Astrocyte of the cerebellum (primary cell): ENCODE measurements at regions of chr2 and their contacts with region 1.

Region 1: DNA sequence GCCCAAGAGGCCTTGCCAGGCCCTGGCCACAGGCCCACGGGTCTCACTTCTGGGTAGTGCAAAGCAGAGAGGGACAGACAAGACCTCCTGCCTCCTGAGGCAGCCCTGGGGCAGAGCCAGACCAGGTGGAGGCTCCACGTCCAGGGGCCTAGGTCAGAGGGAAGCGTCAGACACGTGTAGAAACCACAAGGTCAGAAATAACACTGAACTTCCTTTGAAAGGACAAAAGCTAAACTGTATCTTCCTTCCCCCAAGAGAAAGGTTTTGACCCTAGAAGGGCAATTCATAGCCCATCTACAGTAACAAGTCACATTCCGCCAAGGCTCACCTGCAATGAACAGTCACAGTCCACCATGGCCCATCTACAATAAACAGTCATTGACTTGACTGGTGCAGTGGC is 17.9 kb downstream of the SDC1 start:
- DNase-seq: no peak
- H3K4me3 ChIP-seq: no peak overlapping the region
- CTCF ChIP-seq: no peak

Region 2: DNA sequence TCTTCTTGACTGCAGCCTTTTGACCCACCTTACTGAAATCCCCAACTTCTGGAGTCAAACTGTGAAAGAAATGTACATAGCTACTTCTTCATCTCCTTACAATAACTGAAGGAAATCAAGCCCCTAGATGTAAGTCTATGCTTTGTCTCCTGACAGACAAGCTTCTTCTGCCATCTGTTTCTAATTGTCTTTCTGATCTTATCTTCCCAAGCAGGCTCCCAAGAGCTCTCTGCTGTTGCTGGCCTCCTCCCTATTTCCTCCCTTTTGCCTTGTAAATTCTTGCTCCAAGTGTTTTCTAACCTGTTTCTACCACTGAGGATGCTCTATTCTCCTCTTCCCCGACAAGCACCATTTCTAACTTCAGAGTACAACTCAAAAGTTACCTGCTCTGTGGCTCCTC is 771.2 kb before region 1 on chr2:
- in situ Hi-C with region 1: no loop called
- DNase-seq: no peak
- H3K4me3 ChIP-seq: no peak overlapping the region
- CTCF ChIP-seq: no peak

Region 3: GRCh38 chr2:19554520-19554919 is 652.5 kb before region 1 on chr2:
- in situ Hi-C with region 1: no loop called
- DNase-seq: no peak
- H3K4me3 ChIP-seq: no peak overlapping the region
- CTCF ChIP-seq: no peak

Region 4: DNA sequence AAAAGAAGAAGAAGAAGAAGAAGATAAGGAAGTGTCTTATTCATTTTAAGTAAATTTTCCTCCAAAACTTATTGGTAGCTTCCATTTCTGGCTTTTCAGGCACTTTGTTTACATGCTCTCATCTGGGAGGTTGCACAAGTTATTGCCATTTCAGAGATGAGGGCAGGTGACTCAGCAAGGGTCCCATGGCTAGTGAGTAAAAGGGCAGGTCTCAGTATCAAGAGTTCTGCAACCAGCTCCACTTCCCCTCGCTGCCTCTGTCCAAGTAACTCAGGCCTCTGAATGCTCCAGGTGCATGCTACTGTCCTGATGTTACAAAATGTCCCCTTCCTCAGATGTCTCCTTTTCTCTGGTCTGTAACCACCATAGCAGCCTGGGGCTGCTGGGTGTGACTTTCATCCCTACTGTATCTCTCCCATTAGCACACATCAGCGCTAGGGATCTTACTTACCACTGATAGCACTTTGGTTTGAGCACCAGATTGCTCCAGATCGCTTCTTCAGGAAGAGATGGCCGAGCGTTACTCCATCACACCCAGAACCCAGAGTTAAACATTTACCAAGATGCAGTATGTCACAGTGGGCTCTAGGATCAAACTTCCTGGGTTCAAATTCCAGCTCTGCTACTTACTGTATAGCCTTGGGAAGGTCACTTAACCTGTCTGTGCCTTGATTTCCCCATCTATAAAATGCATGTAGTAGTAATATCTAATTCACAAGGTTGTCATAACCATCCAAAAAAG is 98.2 kb before region 1 on chr2:
- in situ Hi-C with region 1: no loop called
- DNase-seq: no peak
- H3K4me3 ChIP-seq: no peak overlapping the region
- CTCF ChIP-seq: no peak

Region 5: DNA sequence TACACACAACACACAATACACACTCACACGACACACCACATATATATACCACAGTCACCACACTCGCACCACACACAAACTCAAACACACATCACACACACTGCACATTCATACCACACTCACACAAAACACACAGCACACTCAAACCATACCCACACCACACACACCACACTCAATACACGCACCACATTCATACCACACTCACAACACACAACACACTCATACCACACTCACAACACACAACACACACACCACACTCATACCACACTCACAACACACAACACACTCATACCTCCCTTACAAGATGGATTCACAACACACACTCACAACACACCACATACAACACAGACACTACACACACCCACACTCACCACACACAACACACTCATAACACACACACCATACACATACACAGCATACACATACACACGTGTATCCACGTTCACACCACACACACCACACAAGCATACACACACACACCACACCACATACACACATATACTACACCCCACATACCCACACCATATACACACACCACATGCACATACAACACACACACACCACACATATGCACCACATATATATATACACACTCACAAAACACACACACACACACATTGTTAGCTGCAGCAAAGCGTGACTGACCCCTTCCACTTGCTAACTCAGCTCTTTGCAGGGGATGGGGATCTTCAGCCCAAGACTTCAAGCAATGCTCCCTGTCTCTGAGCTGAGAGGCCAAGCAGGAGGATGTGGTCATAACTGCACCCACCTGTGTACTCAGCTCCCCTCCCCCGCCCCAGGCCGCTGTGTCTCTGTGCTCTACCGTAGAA is 41.2 kb before region 1 on chr2:
- in situ Hi-C with region 1: loop called (anchors 5 kb)
- DNase-seq: no peak
- H3K4me3 ChIP-seq: no peak overlapping the region
- CTCF ChIP-seq: no peak